Mammary epithelial cell (primary cell): ENCODE measurements at regions of chr9 and their contacts with region 1.

Region 1: GRCh38 chr9:136079211-136079915 is 15.7 kb downstream of the NACC2 start:
- DNase-seq: no peak
- H3K4me3 ChIP-seq: no peak overlapping the region
- H3K27ac ChIP-seq: no peak overlapping the region
- H3K4me1 ChIP-seq: peaks cover 11% of the 10 kb centered on the region
- H3K27me3 ChIP-seq: no peaks in the 10 kb centered on the region
- CTCF ChIP-seq: no peak

Region 2: GRCh38 chr9:135939351-135940265 is 139.8 kb before region 1 on chr9:
- CTCF ChIA-PET with region 1: no interaction called
- dilution Hi-C with region 1: no loop called
- in situ Hi-C with region 1: no loop called
- intact Hi-C with region 1: no loop called
- DNase-seq: no peak
- H3K4me3 ChIP-seq: no peak overlapping the region
- H3K27ac ChIP-seq: no peak overlapping the region
- H3K4me1 ChIP-seq: no peaks in the 10 kb centered on the region
- H3K27me3 ChIP-seq: no peaks in the 10 kb centered on the region
- CTCF ChIP-seq: no peak

Region 3: DNA sequence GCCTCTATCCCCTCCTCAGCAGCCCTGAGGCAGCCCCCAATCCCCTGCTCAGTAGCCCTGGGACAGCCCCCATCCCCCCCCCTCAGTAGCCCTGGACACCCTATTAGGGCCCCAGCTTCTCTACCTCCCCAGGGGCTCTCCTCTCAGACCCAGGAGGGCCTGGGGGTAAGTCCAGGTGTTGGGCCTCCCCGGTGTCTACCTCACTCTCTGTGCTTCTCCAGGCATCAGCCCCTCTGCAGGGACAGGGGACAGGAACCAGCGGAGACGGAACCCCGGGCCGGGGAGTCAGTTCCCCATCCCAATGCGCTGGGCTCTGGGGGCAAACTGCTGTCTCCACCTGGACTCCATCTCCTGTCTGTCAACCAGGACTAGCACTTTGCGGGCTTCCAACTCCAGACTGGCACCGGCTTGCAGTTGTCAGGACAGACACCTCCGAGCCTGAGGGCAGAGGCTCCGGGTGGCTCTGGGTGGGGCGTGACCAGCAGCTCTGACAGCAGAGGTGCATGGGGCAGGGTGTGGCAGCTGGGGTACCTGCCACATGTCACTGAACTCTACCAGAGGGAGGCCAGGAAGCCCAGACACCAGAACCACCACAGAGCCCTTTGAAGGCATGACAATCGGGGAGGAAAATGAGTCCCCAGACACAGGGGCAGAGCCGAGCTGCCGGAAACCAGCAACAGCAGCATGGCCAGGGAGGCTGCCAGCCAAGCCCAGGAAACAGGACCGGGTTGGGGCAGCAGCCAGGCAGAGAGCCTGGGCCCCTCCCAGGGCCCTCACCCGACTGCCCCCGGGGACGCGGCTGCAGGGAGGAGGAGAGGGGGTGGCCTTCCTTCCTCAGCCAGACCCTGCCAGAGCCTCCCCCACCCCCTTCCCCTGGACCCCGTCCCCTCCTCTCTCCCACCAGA is 100.5 kb before region 1 on chr9:
- CTCF ChIA-PET with region 1: no interaction called
- dilution Hi-C with region 1: loop called (anchors 5 kb)
- in situ Hi-C with region 1: no loop called
- intact Hi-C with region 1: no loop called
- DNase-seq: no peak
- H3K4me3 ChIP-seq: no peak overlapping the region
- H3K27ac ChIP-seq: no peak overlapping the region
- H3K4me1 ChIP-seq: peaks cover 6% of the 10 kb centered on the region
- H3K27me3 ChIP-seq: peaks cover 2% of the 10 kb centered on the region
- CTCF ChIP-seq: no peak